ENCODE measurements at regions of chr20 and their contacts with region 1.

Region 1: DNA sequence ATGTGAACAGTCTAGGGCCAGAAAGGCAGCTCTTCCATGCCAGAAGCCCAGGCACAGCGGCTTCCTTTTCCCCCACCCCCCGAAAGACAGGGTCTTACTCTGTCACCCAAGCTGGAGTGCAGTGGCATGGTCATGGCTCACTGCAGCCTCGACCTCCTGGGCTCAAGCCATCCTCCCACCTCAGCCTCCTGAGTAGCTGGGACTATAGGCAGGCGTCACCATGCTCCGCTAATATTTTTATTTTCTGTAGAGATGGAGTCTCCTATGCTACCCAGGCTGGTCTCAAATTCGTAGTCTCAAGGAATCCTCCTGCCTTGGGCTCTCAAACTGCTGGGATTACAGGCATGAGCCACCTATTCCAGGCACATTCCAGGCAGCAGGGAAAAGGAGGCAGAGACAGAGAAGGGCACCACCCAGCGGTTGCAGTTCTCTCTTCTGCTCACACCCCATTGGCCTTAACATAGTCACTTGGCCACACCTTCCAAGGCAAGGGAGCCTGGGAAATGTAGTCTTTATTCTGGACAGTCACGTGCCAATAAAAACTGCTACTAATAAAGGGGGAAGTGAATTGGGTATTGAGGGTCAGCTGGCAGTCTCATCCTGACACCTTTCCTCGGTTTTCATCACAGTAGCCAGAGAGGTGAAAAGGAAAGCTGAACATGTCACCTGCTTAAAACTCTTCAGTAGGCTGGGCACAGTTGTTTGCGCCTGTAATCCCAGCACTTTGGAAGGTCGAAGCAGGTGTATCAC is 205.9 kb downstream of the ZMYND8 start:
- DNase-seq: peak; percentile 54
- H3K4me3 ChIP-seq: no peak overlapping the region
- H3K27ac ChIP-seq: no peak overlapping the region
- H3K4me1 ChIP-seq: peaks cover 8% of the 10 kb centered on the region
- H3K27me3 ChIP-seq: no peaks in the 10 kb centered on the region
- CTCF ChIP-seq: peak; percentile 63 to 66

Region 2: GRCh38 chr20:46767127-46767761 is 383.3 kb before region 1 on chr20:
- CTCF ChIA-PET with region 1: no interaction called
- dilution Hi-C with region 1: no loop called
- in situ Hi-C with region 1: loop called in 1 of 2 experiments (anchors 10 kb)
- intact Hi-C with region 1: loop called (anchors 1 kb)
- DNase-seq: peak; percentile 36
- H3K4me3 ChIP-seq: no peak overlapping the region
- H3K27ac ChIP-seq: no peak overlapping the region
- H3K4me1 ChIP-seq: no peaks in the 10 kb centered on the region
- H3K27me3 ChIP-seq: no peaks in the 10 kb centered on the region
- CTCF ChIP-seq: peak; percentile 83 to 85

Region 3: GRCh38 chr20:46970923-46971616 is 179.5 kb before region 1 on chr20:
- CTCF ChIA-PET with region 1: no interaction called
- dilution Hi-C with region 1: no loop called
- in situ Hi-C with region 1: no loop called
- intact Hi-C with region 1: loop called (anchors 10 kb)
- DNase-seq: peak; percentile 88
- H3K4me3 ChIP-seq: no peak overlapping the region
- H3K27ac ChIP-seq: no peak overlapping the region
- H3K4me1 ChIP-seq: peaks cover 12% of the 10 kb centered on the region
- H3K27me3 ChIP-seq: no peaks in the 10 kb centered on the region
- CTCF ChIP-seq: no peak